MCF 10A (cell line): ENCODE measurements at regions of chr21 and their contacts with region 1.

Region 1: GRCh38 chr21:17454315-17455027 is 58.4 kb upstream of the CXADR start:
- DNase-seq: peak; percentile 85
- H3K4me3 Mint-ChIP-seq: peak overlapping the region; percentile 28
- H3K27ac Mint-ChIP-seq: peak overlapping the region; percentile 77
- H3K4me1 Mint-ChIP-seq: peaks cover 7% of the 10 kb centered on the region
- H3K27me3 Mint-ChIP-seq: no peaks in the 10 kb centered on the region
- CTCF ChIP-seq: no peak

Region 2: DNA sequence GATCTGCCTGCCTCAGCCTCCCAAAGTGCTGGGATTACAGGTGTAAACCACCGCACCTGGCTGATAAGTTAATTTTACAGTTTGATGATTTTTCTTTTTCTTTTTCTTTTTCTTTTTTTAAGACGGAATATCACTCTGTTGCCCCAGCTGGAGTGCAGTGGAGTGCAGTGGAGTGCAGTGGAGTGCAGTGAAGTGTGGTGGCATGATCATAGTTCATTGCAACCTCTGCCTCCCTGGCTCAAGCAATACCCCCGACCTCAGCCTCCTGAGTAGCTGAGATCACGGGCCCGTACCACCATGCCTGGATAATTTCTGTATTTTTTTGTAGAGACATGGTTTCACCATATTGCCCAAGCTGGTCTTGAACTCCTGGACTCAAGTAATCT is 26.0 kb before region 1 on chr21:
- CTCF ChIA-PET with region 1: no interaction called
- POLR2A ChIA-PET with region 1: no interaction called
- intact Hi-C with region 1: no loop called
- DNase-seq: no peak
- H3K4me3 Mint-ChIP-seq: no peak overlapping the region
- H3K27ac Mint-ChIP-seq: no peak overlapping the region
- H3K4me1 Mint-ChIP-seq: no peaks in the 10 kb centered on the region
- H3K27me3 Mint-ChIP-seq: no peaks in the 10 kb centered on the region
- CTCF ChIP-seq: no peak

Region 3: DNA sequence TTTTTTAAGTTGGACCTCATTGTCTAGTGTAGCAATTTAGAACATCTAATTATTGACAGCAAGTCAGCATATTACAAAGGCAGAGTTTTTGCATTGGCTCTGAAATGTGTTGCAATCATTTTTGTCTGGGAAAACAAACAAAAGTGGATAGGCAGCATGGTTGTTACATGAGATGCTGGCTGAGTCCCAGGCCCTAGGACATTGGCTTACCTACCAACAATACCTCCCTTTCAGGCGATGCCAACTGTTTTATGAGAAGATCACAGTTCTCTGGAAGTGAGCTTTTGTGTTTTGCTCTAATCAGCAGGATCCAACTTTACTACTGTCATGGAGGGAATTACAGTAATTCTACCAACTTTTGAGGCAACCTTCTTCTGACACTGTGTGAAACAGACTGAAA is 13.1 kb before region 1 on chr21:
- CTCF ChIA-PET with region 1: interaction called, 3 read pairs
- POLR2A ChIA-PET with region 1: interaction called, 27 read pairs
- intact Hi-C with region 1: no loop called
- DNase-seq: peak; percentile 97
- H3K4me3 Mint-ChIP-seq: no peak overlapping the region
- H3K27ac Mint-ChIP-seq: no peak overlapping the region
- H3K4me1 Mint-ChIP-seq: peaks cover 21% of the 10 kb centered on the region
- H3K27me3 Mint-ChIP-seq: no peaks in the 10 kb centered on the region
- CTCF ChIP-seq: no peak

Region 4: GRCh38 chr21:17491716-17492414 is 37.4 kb after region 1 on chr21:
- CTCF ChIA-PET with region 1: interaction called, 3 read pairs
- POLR2A ChIA-PET with region 1: interaction called, 4 read pairs
- intact Hi-C with region 1: loop called (anchors 5 kb)
- DNase-seq: peak; percentile 96
- H3K4me3 Mint-ChIP-seq: peak overlapping the region; percentile 0
- H3K27ac Mint-ChIP-seq: peak overlapping the region; percentile 86
- H3K4me1 Mint-ChIP-seq: peaks cover 32% of the 10 kb centered on the region
- H3K27me3 Mint-ChIP-seq: peaks cover 19% of the 10 kb centered on the region
- CTCF ChIP-seq: no peak

Region 5: GRCh38 chr21:17560377-17561025 is 106.0 kb after region 1 on chr21:
- CTCF ChIA-PET with region 1: no interaction called
- POLR2A ChIA-PET with region 1: no interaction called
- intact Hi-C with region 1: no loop called
- DNase-seq: no peak
- H3K4me3 Mint-ChIP-seq: no peak overlapping the region
- H3K27ac Mint-ChIP-seq: no peak overlapping the region
- H3K4me1 Mint-ChIP-seq: no peaks in the 10 kb centered on the region
- H3K27me3 Mint-ChIP-seq: no peaks in the 10 kb centered on the region
- CTCF ChIP-seq: no peak

Region 6: GRCh38 chr21:17726047-17726830 is 271.8 kb after region 1 on chr21:
- CTCF ChIA-PET with region 1: no interaction called
- POLR2A ChIA-PET with region 1: no interaction called
- intact Hi-C with region 1: no loop called
- DNase-seq: peak; percentile 25
- H3K4me3 Mint-ChIP-seq: no peak overlapping the region
- H3K27ac Mint-ChIP-seq: peak overlapping the region; percentile 57
- H3K4me1 Mint-ChIP-seq: peaks cover 10% of the 10 kb centered on the region
- H3K27me3 Mint-ChIP-seq: no peaks in the 10 kb centered on the region
- CTCF ChIP-seq: no peak